ENCODE measurements at regions of chr11 and their contacts with region 1.

Region 1: DNA sequence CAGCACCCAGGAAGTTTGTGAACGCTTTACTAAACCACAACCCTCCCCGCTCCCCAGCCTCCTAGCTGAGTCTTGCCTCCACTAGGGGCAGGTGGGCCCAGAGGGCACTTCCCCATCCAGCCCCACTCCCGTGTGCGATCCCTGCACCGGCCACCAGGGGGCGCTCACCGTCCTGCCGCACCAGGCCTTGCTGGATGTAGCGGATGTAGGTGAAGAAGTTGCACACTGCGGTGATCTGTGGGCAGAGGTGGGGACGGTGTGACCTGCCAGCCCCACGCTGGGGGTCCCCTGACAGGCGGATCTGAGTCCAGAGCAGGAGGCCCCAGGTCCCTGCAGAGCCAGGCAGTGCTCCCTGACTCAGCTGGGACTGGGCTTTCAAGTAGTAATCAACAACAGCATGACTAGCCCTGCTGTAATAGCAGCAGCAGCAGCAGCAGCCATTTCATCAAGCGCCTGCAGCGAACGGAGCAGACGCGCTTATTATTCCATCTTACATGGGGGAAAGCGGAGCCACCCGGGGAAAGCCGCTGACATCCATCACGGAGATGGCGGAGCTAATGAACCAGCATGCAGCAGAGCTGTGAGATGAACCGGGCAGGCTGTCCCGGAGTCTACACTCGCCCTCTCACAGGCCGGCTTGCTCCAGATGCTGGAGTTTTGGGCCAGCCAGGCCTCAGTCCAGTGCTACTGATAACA is 7.9 kb upstream of the FADS3 start:
- DNase-seq: peak; percentile 66 to 98 (median 87)
- ATAC-seq: peak; percentile 80 to 91 (median 89)
- H3K4me3 ChIP-seq: no peak overlapping the region
- H3K27ac ChIP-seq: no peak overlapping the region
- H3K4me1 ChIP-seq: no peaks in the 10 kb centered on the region
- H3K27me3 ChIP-seq: no peaks in the 10 kb centered on the region
- CTCF ChIP-seq: peak; percentile 100

Region 2: GRCh38 chr11:61947486-61948210 is 48.4 kb after region 1 on chr11:
- intact Hi-C with region 1: loop called in 2 of 3 experiments (anchors 2 kb)
- DNase-seq: peak; percentile 75 to 91 (median 86)
- ATAC-seq: peak; percentile 67 to 90 (median 85)
- H3K4me3 ChIP-seq: no peak overlapping the region
- H3K27ac ChIP-seq: no peak overlapping the region
- H3K4me1 ChIP-seq: peaks cover 11 to 18% (median 17%) of the 10 kb centered on the region in 3 donors
- H3K27me3 ChIP-seq: no peaks in the 10 kb centered on the region
- CTCF ChIP-seq: peak; percentile 73 to 76 (median 74)

Region 3: DNA sequence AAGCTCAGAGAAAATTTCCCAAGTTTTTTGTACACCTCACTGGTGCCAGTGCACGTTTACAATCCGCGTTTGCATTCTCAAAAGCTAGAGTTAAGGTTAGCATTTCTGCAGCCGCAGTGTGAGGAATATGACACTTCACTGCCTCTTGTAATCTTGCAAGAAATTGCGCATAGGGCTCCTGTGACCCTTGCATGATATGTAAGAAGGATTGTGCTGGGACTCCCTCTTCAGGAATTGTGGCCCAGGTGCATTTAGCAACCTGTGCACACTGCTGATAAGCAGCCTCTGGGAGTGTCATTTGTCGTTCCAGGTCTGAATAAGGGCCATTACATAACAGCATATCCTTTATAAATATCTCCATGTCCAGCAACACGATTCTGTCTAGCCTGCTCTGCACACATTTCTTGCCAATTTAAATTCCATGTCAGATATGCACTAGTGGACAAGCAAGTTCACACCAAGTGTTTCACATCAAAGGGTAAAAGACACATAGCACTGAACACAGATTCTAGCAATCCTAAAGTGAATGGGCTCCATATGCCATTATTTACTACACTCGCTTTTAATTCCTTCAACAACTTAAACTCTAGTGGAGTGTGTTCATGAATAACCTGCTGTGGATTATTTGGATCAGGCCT is 155.3 kb after region 1 on chr11:
- intact Hi-C with region 1: loop called in 1 of 3 experiments (anchors 5 kb)
- DNase-seq: peak in 2 of 6 donors; percentile 49 to 56
- ATAC-seq: peak in 2 of 4 donors; percentile 52 to 66
- H3K4me3 ChIP-seq: no peak overlapping the region
- H3K27ac ChIP-seq: no peak overlapping the region
- H3K4me1 ChIP-seq: no peaks in the 10 kb centered on the region
- H3K27me3 ChIP-seq: no peaks in the 10 kb centered on the region
- CTCF ChIP-seq: peak in 1 of 4 donors; percentile 22

Region 4: GRCh38 chr11:62081378-62082291 is 182.3 kb after region 1 on chr11:
- intact Hi-C with region 1: loop called in 1 of 3 experiments (anchors 5 kb)
- DNase-seq: peak; percentile 66 to 92 (median 84)
- ATAC-seq: peak; percentile 93 to 100 (median 98)
- H3K4me3 ChIP-seq: no peak overlapping the region
- H3K27ac ChIP-seq: no peak overlapping the region
- H3K4me1 ChIP-seq: no peaks in the 10 kb centered on the region
- H3K27me3 ChIP-seq: no peaks in the 10 kb centered on the region
- CTCF ChIP-seq: peak; percentile 73 to 87 (median 77)

Region 5: GRCh38 chr11:62266558-62266957 is 367.3 kb after region 1 on chr11:
- intact Hi-C with region 1: no loop called
- DNase-seq: no peak
- ATAC-seq: no peak
- H3K4me3 ChIP-seq: no peak overlapping the region
- H3K27ac ChIP-seq: no peak overlapping the region
- H3K4me1 ChIP-seq: no peaks in the 10 kb centered on the region
- H3K27me3 ChIP-seq: no peaks in the 10 kb centered on the region
- CTCF ChIP-seq: no peak

Measured in pancreas (tissue), 10 donors.